Activated CD4-positive, alpha-beta memory T cell treated with anti-CD3 and anti-CD28 coated beads, Interleukin-2, amount 10 ng/mL, durations not matched to agents 7 days and 5 days (primary cell): ENCODE measurements at regions of chr2 and their contacts with region 1.

Region 1: GRCh38 chr2:181891258-181891965 is at the start of gene ITPRID2:
- DNase-seq: peak; percentile 76
- H3K4me3 Mint-ChIP-seq: peak within 1 kb of the TSS; percentile 91
- H3K27ac Mint-ChIP-seq: peak within 1 kb of the TSS; percentile 82
- H3K4me1 Mint-ChIP-seq: peaks cover 31% of the 10 kb centered on the region
- H3K27me3 Mint-ChIP-seq: peaks cover 29% of the 10 kb centered on the region
- total RNA-seq, gene ITPRID2: 53.0 to 53.2 TPM

Region 2: DNA sequence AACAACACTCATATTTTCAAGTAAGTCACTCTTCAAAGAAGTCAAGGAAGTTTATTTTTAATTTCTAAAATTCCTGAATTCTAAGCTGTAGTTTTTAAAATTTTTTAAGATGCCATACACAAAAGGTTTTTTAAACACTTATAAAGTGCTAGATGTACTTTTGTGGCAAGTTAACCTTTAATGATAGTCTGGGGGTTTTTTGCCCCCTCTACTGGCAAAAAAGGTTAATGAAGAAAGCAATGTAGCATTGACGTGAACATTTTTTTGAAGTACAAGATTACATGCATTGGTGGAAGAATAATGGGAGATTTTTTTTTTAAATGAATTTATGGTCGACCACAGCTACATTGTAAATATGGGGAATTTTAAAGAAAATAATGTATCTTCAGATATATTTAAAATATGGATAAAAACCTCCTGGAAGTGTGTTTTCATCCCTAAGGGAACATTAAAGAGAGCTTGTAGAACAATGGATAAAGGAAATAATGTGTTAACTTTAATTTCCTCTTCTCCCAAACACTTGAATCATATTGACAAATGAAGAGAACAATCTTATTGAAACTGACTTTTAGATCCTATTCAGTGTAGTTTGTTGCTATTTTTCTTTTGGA is 12.7 kb after region 1 on chr2:
- CTCF ChIA-PET with region 1: interaction called, 29 read pairs
- POLR2A ChIA-PET with region 1: interaction called, 3 read pairs
- DNase-seq: no peak
- H3K4me3 Mint-ChIP-seq: no peak overlapping the region
- H3K27ac Mint-ChIP-seq: no peak overlapping the region
- H3K4me1 Mint-ChIP-seq: peaks cover 20% of the 10 kb centered on the region
- H3K27me3 Mint-ChIP-seq: no peaks in the 10 kb centered on the region